GM12878 (cell line): ENCODE measurements at regions of chr3 and their contacts with region 1.

Region 1: GRCh38 chr3:120649830-120650233 is 32.2 kb downstream of the HGD start:
- DNase-seq: no peak
- ATAC-seq: peak; percentile 36; the same call in 1 of the 3 replicates
- H3K4me3 ChIP-seq: no peak overlapping the region
- H3K27ac ChIP-seq: no peak overlapping the region
- H3K4me1 ChIP-seq: no peaks in the 10 kb centered on the region
- H3K27me3 ChIP-seq: no peaks in the 10 kb centered on the region
- CTCF ChIP-seq: no peak
- EP300 ChIP-seq: no peak
- POLR2A ChIP-seq: no peak
- RAD21 ChIP-seq: no peak

Region 2: GRCh38 chr3:120678331-120678947 is 28.6 kb after region 1 on chr3:
- CTCF ChIA-PET with region 1: no interaction called
- POLR2A ChIA-PET with region 1: no interaction called
- RAD21 ChIA-PET with region 1: interaction called, 12 read pairs
- SMC1A ChIA-PET with region 1: interaction called, 4 read pairs
- in situ Hi-C with region 1: no loop called
- intact Hi-C with region 1: no loop called
- DNase-seq: peak; percentile 35
- ATAC-seq: peak; percentile 92
- H3K4me3 ChIP-seq: no peak overlapping the region
- H3K27ac ChIP-seq: peak overlapping the region; percentile 45
- H3K4me1 ChIP-seq: peaks cover 12% of the 10 kb centered on the region; the same call in 1 of the 2 replicates
- H3K27me3 ChIP-seq: no peaks in the 10 kb centered on the region
- CTCF ChIP-seq: no peak
- EP300 ChIP-seq: no peak
- POLR2A ChIP-seq: no peak
- RAD21 ChIP-seq: no peak